HCT116 (cell line): ENCODE measurements at regions of chr2 and their contacts with region 1.

Region 1: GRCh38 chr2:42494355-42495233 is 812 bp upstream of the KCNG3 start:
- DNase-seq: peak; percentile 82
- ATAC-seq: peak; percentile 73
- H3K4me3 ChIP-seq: peak overlapping the region; percentile 56 to 68
- H3K27ac ChIP-seq: peak overlapping the region; percentile 39; the same call in 1 of the 2 replicates
- H3K4me1 ChIP-seq: peaks cover 0 to 21% of the 10 kb centered on the region in 2 experiments; a peak in 3 of 4 replicates
- H3K27me3 ChIP-seq: no peaks in the 10 kb centered on the region
- CTCF ChIP-seq: peak; percentile 83 to 92 (median 85)
- POLR2A ChIP-seq: no peak
- RAD21 ChIP-seq: peak; percentile 83

Region 2: DNA sequence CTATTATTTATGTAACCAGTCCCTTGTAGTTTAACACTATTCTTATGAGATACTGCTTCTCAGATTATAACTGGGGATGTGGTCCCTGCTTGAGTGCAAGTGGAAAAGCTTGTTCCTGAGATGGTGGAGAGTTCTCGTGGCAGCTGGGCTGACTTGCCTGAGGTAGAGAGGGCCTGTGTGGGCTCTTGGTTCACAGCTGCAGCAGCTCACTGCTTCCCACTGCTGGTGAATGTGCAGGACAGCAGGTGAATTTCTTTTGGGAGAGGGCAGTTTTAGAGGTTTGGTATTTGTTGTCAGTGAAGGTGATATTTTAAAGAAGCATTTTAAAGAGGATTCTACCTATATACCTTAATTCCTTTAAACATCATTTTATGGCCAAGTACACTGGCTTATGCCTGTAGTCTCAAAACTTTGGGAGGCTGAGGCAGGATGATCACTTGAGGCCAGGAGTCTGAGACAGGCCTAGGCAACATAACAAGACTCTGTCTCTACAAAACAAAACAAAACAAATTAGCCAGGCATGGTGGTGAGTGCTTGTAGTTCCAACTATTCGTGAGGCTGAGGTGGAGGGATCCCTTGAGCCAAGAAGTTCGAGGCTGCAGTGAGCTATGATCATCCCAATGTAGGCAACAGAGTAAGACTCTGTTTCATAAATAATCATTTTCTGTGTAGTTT is 168.6 kb after region 1 on chr2:
- CTCF ChIA-PET with region 1: no interaction called
- POLR2A ChIA-PET with region 1: no interaction called
- RAD21 ChIA-PET with region 1: no interaction called
- intact Hi-C with region 1: loop called (anchors 1 kb)
- DNase-seq: peak; percentile 46
- ATAC-seq: peak; percentile 97
- H3K4me3 ChIP-seq: no peak overlapping the region
- H3K27ac ChIP-seq: no peak overlapping the region
- H3K4me1 ChIP-seq: no peaks in the 10 kb centered on the region
- H3K27me3 ChIP-seq: no peaks in the 10 kb centered on the region
- CTCF ChIP-seq: peak; percentile 90 to 99 (median 98)
- POLR2A ChIP-seq: no peak
- RAD21 ChIP-seq: peak; percentile 92

Region 3: GRCh38 chr2:42696987-42697386 is 202.4 kb after region 1 on chr2:
- CTCF ChIA-PET with region 1: no interaction called
- POLR2A ChIA-PET with region 1: no interaction called
- RAD21 ChIA-PET with region 1: no interaction called
- intact Hi-C with region 1: no loop called
- DNase-seq: no peak
- ATAC-seq: no peak
- H3K4me3 ChIP-seq: no peak overlapping the region
- H3K27ac ChIP-seq: no peak overlapping the region
- H3K4me1 ChIP-seq: peaks cover 0 to 2% of the 10 kb centered on the region in 2 experiments; a peak in 1 of 4 replicates
- H3K27me3 ChIP-seq: no peaks in the 10 kb centered on the region
- CTCF ChIP-seq: no peak
- POLR2A ChIP-seq: no peak
- RAD21 ChIP-seq: no peak

Region 4: DNA sequence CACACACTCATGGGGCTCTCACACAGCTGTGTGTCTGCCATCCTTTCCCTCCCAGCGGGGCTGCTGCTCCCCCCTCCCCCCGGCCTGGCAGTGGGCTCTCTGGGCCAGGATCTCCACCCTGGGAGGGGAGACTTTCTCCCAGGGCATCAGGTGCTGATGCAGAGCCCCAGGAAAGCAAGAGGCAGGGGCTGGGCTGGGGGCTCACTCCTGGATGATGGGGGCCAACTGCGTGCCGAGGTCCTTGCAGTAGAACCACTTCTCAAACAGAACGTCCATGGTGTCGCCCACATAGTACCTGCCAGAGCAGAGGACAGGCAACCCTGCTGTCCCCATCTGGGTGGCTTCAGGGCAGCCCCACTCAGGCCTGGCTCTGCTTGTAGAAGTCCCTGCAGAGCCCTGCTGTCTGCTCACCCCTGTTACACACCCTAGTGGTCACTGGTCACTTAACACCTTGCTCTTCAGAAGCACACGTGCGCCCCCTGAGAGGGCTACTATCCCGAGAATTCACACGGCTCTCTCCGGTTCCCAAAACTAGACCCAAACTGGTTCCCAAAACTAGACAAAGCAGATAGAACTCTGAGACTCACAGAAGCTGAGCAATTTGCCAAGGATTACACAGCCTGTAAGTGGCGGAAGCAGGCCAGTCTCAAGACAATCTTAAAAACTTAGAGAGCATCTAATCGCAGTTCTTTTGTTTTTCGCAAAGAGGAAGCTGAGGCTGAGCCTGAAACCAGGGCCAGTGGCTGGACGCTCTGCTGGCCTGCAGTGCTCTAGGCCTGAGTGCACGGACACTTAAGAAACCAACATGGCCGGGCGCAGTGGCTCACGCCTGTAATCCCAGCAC is 275.9 kb after region 1 on chr2:
- CTCF ChIA-PET with region 1: no interaction called
- POLR2A ChIA-PET with region 1: no interaction called
- RAD21 ChIA-PET with region 1: no interaction called
- intact Hi-C with region 1: loop called (anchors 10 kb)
- DNase-seq: peak; percentile 48
- ATAC-seq: peak; percentile 97
- H3K4me3 ChIP-seq: no peak overlapping the region
- H3K27ac ChIP-seq: no peak overlapping the region
- H3K4me1 ChIP-seq: peaks cover 0 to 3% of the 10 kb centered on the region in 2 experiments; a peak in 1 of 4 replicates
- H3K27me3 ChIP-seq: no peaks in the 10 kb centered on the region
- CTCF ChIP-seq: peak; percentile 63 to 98 (median 73)
- POLR2A ChIP-seq: no peak
- RAD21 ChIP-seq: peak; percentile 76